ENCODE measurements at regions of chr10 and their contacts with region 1.

Region 1: DNA sequence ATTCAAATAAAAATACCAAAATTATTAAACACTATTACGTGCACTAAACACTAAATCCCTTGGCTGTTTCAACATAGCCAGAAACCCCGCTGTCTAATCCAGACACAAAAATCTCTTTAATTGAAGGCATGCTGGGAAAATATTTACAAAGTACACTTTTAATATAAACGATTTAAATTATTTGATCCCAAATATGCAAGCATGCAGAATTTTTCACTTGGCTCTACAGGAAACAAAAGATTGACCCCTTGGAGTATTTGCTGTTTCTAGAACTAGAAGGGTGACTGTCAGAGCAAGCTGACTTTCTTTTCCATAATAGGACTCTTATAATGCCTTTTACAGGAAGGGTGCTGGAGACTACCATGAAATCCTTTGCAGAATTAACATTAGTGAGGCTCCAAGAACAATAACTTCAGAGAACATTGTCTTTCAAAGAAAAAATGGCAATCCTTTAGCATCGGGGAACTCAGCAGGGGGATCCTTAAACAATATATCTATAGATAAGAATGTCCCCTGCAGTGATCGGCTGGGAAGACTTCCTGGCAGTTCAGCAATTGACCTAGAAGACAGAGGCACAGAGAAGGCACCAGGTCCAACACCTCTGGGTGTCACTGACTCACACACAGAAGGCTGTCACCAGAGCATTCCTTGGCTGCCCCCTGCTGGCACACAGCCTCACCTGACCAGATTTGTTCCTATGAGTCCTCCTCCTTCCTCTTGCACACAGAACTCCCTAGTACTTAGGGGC is 55.8 kb upstream of the MRLN start:
- DNase-seq: peak; percentile 39
- CTCF ChIP-seq: peak; percentile 85

Region 2: GRCh38 chr10:58781873-58782488 is 1027.1 kb before region 1 on chr10:
- in situ Hi-C with region 1: loop called (anchors 25 kb)
- DNase-seq: peak; percentile 39
- CTCF ChIP-seq: peak; percentile 36

Region 3: GRCh38 chr10:59633063-59633462 is 176.0 kb before region 1 on chr10:
- in situ Hi-C with region 1: loop called (anchors 10 kb)
- DNase-seq: no peak
- CTCF ChIP-seq: no peak